T-cell (primary cell): ENCODE measurements at regions of chr1 and their contacts with region 1.

Region 1: DNA sequence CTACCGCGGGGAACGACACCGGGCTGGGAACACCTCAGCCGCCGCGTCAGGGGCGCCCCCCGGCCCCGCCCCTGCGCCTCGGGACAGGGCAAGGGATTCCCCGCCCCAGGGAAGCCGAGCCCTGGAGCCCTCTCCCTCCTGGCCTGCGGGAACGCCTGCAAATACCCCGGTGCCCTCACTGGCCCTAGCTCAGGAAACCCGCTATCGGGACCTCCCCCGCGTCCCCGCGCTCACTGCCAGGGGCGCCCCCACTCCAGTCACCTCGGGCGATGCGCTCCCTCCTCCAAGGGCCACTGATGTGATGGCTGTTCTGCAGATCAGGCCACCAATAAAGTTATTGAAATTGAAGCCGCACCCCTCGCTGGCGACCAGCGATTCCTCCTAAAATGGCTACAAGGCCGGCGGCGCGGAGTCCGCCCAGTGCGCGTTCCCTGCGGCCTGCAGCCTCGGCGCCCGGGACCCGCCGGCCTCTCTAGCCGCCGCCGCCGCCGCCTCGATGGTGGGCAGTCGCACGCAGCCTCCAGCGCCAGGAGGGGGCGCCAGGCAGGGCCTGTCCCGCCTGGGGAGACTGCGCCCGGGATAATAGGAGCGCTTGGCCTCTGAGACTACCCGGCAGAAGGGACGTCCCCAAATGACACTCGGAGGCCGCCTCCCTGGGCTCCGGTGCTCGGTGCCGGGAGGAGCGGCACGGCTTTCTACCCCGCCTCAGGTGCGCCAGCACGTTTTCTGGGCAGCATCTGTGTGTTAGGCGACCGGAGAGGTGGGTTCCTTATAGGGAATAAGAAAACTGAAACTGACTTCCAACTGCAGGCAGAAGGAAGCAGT is at the start of gene PRKAB2:
- DNase-seq: peak; percentile 48 to 93 (median 71)
- ATAC-seq: peak; percentile 82 to 92 (median 88)
- H3K4me3 ChIP-seq: peak within 1 kb of the TSS; percentile 62 to 90
- H3K4me3 Mint-ChIP-seq: peak within 1 kb of the TSS; percentile 97 to 99 (median 97)
- H3K27ac ChIP-seq: peak within 1 kb of the TSS; percentile 78
- H3K27ac Mint-ChIP-seq: peak within 1 kb of the TSS; percentile 96 to 97
- H3K4me1 ChIP-seq: peaks cover 11 to 18% of the 10 kb centered on the region in 2 experiments
- H3K4me1 Mint-ChIP-seq: peaks cover 36 to 46% (median 44%) of the 10 kb centered on the region in 3 donors
- H3K27me3 ChIP-seq: no peaks in the 10 kb centered on the region
- H3K27me3 Mint-ChIP-seq: peaks cover 0 to 2% of the 10 kb centered on the region in 2 donors
- total RNA-seq, gene PRKAB2: 13.6 to 22.0 (median 18.4) TPM

Region 2: DNA sequence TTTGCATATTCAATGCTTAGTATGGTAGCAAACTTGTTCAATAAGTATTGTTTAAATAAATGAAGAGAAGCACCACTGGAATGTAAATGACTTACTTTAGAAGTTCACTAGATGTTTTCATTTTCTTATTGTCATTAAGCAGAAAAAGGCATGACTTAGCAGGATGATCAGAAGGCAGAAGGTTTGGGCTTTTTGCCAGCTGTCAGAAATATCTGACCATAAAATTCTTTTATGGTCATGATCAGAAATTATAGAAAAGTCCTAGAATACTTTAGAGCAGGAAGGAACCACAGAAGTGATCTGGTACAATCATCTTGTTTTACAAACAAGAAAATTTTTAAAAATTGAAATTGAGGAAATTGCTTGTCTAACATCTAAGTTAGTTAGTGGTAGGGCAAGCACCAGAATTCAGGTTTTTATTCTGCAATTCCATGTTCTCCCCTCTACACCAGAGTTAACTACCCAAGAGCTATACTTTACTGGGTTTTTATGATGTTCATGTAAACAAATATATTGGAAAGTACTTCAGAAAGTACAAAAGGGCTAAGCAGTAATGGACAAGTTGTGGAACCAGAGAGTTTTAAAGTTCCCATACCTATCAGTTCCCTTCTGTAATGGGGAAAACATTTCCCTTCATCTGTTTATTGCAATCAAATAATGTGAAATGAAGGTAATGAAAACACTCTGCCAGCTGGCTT is 42.6 kb after region 1 on chr1:
- CTCF ChIA-PET with region 1: no interaction called
- POLR2A ChIA-PET with region 1: no interaction called
- DNase-seq: no peak
- ATAC-seq: no peak
- H3K4me3 ChIP-seq: no peak overlapping the region
- H3K4me3 Mint-ChIP-seq: no peak overlapping the region
- H3K27ac ChIP-seq: no peak overlapping the region
- H3K27ac Mint-ChIP-seq: no peak overlapping the region
- H3K4me1 ChIP-seq: no peaks in the 10 kb centered on the region
- H3K4me1 Mint-ChIP-seq: no peaks in the 10 kb centered on the region
- H3K27me3 ChIP-seq: no peaks in the 10 kb centered on the region
- H3K27me3 Mint-ChIP-seq: no peaks in the 10 kb centered on the region

Region 3: GRCh38 chr1:147242439-147243227 is 70.3 kb after region 1 on chr1 and contains the start of gene CHD1L:
- CTCF ChIA-PET with region 1: interaction called, 3 to 11 read pairs
- POLR2A ChIA-PET with region 1: no interaction called
- DNase-seq: peak; percentile 82 to 97 (median 90)
- ATAC-seq: peak; percentile 91 to 94 (median 92)
- H3K4me3 ChIP-seq: peak within 1 kb of the TSS; percentile 70 to 77
- H3K4me3 Mint-ChIP-seq: peak within 1 kb of the TSS; percentile 90 to 93 (median 91)
- H3K27ac ChIP-seq: peak within 1 kb of the TSS; percentile 31
- H3K27ac Mint-ChIP-seq: peak within 1 kb of the TSS; percentile 56 to 77
- H3K4me1 ChIP-seq: peaks cover 10 to 11% of the 10 kb centered on the region in 2 experiments
- H3K4me1 Mint-ChIP-seq: peaks cover 40 to 43% (median 41%) of the 10 kb centered on the region in 3 donors
- H3K27me3 ChIP-seq: no peaks in the 10 kb centered on the region
- H3K27me3 Mint-ChIP-seq: peaks cover 0 to 3% of the 10 kb centered on the region in 2 donors
- total RNA-seq, gene CHD1L: 25.1 to 43.9 (median 33.8) TPM